ENCODE measurements at regions of chr22 and their contacts with region 1.

Region 1: DNA sequence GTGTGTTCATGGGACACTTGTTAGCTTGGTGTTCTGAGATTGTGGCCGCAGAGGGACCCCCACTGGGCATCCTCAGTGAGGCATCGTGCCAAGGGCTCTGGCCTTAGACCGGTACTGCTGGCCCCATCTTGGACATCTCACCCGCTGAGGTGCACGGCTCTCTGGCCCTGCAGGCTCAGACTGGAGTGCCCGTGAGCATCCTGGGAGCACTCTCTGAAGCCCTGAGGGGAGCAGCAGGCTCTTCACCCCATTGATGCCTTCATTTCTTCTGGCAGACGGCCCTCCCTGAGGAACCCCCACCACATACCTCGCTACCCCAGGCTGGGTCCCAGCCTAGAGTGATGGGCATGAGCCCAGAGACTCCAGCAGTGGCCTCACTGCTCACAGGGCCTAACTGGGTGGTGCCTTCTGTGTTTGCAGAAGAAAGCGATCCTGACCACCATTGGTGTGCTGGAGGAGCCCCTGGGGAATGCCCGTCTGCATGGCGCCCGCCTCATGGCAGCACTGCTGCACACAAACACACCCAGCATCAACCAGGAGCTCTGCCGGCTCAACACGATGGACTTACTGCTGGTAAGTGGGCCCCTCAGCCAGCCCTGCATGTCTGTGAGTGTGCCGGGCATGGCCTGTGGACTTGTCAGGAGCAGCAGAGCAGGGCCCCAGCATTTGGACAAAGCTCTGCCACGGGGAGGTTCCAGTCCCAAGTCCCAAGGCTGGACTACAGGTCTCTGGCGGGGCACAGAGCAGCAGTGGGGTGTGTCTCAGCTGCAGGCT is 51.6 kb downstream of the SBF1 start:
- DNase-seq: no peak
- H3K4me3 ChIP-seq: no peak overlapping the region
- H3K27ac ChIP-seq: no peak overlapping the region
- H3K4me1 ChIP-seq: no peaks in the 10 kb centered on the region
- H3K27me3 ChIP-seq: no peaks in the 10 kb centered on the region
- CTCF ChIP-seq: no peak
- POLR2A ChIP-seq: no peak

Region 2: DNA sequence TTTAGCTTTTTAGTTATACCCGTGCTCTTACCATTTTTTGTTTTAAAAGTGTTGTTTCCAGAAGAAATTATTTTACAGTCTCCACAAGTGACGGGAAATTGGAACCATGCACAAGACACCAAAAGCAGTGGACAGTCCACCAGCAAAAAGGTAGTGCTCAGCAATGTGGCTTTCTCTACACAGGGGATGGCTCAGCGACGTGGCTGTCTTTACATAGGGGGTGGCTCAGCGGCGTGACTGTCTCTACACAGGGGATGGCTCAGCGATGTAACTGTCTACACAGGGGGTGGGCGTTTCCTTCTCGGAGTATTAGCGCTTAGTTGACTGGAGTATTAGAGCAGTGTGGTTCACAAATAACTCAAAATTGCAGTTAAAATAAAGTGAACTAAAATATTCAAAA is 288.7 kb before region 1 on chr22:
- intact Hi-C with region 1: loop called (anchors 5 kb)
- DNase-seq: peak in 1 of 2 donors; percentile 6
- H3K4me3 ChIP-seq: no peak overlapping the region
- H3K27ac ChIP-seq: no peak overlapping the region
- H3K4me1 ChIP-seq: no peaks in the 10 kb centered on the region
- H3K27me3 ChIP-seq: no peaks in the 10 kb centered on the region
- CTCF ChIP-seq: no peak
- POLR2A ChIP-seq: no peak

Measured in uterus (tissue), 4 donors.